ENCODE measurements at regions of chr2 and their contacts with region 1.

Region 1: GRCh38 chr2:170815746-170816503 is 762 bp upstream of the GAD1 start:
- DNase-seq: peak; percentile 54
- H3K4me3 Mint-ChIP-seq: peak overlapping the region; percentile 79
- H3K27ac Mint-ChIP-seq: peak overlapping the region; percentile 77
- H3K4me1 Mint-ChIP-seq: peaks cover 35% of the 10 kb centered on the region
- H3K27me3 Mint-ChIP-seq: peaks cover 83% of the 10 kb centered on the region

Region 2: GRCh38 chr2:170324640-170325046 is 491.3 kb before region 1 on chr2:
- intact Hi-C with region 1: loop called (anchors 1 kb)
- DNase-seq: peak; percentile 36
- H3K4me3 Mint-ChIP-seq: no peak overlapping the region
- H3K27ac Mint-ChIP-seq: no peak overlapping the region
- H3K4me1 Mint-ChIP-seq: no peaks in the 10 kb centered on the region
- H3K27me3 Mint-ChIP-seq: peaks cover 4% of the 10 kb centered on the region

Region 3: GRCh38 chr2:170369894-170370293 is 446.0 kb before region 1 on chr2:
- intact Hi-C with region 1: loop called (anchors 1 kb)
- DNase-seq: no peak
- H3K4me3 Mint-ChIP-seq: no peak overlapping the region
- H3K27ac Mint-ChIP-seq: no peak overlapping the region
- H3K4me1 Mint-ChIP-seq: peaks cover 44% of the 10 kb centered on the region
- H3K27me3 Mint-ChIP-seq: peaks cover 12% of the 10 kb centered on the region

Region 4: DNA sequence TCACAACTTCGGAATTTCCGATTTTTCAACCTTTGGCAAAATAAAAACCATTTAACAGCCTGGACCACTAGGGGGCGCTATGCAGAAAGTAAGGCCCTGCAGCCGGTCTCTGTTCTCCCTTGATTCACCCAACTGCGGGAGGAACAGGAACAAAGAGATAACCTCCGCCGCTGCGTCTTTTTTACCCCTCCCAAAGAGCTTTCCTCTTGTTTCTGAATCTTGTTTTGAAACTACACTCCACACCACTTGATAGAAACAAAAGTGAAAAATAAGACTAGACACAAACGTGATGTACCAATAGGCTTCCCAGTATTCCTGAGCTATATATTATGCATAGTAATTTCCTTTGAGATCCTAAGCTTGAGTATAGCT is 406.8 kb before region 1 on chr2:
- intact Hi-C with region 1: loop called (anchors 1 kb)
- DNase-seq: peak; percentile 52
- H3K4me3 Mint-ChIP-seq: peak overlapping the region; percentile 45
- H3K27ac Mint-ChIP-seq: no peak overlapping the region
- H3K4me1 Mint-ChIP-seq: peaks cover 8% of the 10 kb centered on the region
- H3K27me3 Mint-ChIP-seq: peaks cover 10% of the 10 kb centered on the region

Region 5: DNA sequence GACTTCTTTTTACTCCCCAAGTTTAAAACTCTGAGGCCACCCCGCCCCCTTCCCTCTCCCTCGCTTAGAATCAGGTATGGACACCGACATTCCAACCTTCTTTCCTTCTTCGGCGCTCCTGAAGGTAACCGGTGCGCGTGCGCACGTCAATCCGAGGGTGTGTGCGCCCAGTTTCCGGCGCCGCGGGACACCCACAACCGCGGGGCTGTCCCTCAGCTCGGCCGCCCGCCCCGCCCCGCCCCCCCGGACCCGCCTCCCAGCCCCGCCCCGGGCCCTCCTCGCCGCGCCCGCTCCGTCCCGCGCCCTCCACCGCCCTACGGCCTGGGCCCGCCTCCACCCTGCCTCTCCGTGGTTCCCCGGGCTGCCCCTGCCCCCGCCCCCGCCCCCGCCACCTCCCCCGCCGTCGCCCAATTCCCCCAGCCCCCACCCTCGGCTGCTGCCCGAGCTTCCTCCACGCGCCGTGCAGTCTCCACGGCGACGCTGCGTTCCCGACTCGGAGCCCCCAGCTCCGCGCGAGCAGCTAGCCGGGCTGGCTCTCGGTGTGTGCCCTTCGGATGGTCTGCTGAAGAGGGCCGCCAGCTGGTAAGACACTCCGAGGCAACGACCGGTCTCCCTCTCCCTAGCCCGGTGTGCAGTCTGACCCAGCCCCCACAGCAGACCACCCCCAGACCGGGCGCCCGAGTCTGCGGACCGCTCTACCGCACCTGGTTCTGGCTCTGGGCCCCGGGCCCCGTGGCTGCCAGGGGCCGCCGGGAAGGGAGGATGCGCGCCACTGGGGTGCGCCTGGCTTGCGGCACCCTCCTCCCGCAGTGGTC is 45.1 kb before region 1 on chr2:
- intact Hi-C with region 1: loop called (anchors 2 kb)
- DNase-seq: peak; percentile 58
- H3K4me3 Mint-ChIP-seq: peak overlapping the region; percentile 83
- H3K27ac Mint-ChIP-seq: peak overlapping the region; percentile 55
- H3K4me1 Mint-ChIP-seq: peaks cover 7% of the 10 kb centered on the region
- H3K27me3 Mint-ChIP-seq: peaks cover 45% of the 10 kb centered on the region

Region 6: GRCh38 chr2:170829036-170829435 is 13.1 kb after region 1 on chr2:
- intact Hi-C with region 1: no loop called
- DNase-seq: no peak
- H3K4me3 Mint-ChIP-seq: no peak overlapping the region
- H3K27ac Mint-ChIP-seq: no peak overlapping the region
- H3K4me1 Mint-ChIP-seq: no peaks in the 10 kb centered on the region
- H3K27me3 Mint-ChIP-seq: peaks cover 33% of the 10 kb centered on the region

Region 7: GRCh38 chr2:170862286-170862902 is 46.5 kb after region 1 on chr2:
- intact Hi-C with region 1: no loop called
- DNase-seq: no peak
- H3K4me3 Mint-ChIP-seq: no peak overlapping the region
- H3K27ac Mint-ChIP-seq: no peak overlapping the region
- H3K4me1 Mint-ChIP-seq: no peaks in the 10 kb centered on the region
- H3K27me3 Mint-ChIP-seq: peaks cover 18% of the 10 kb centered on the region

Region 8: DNA sequence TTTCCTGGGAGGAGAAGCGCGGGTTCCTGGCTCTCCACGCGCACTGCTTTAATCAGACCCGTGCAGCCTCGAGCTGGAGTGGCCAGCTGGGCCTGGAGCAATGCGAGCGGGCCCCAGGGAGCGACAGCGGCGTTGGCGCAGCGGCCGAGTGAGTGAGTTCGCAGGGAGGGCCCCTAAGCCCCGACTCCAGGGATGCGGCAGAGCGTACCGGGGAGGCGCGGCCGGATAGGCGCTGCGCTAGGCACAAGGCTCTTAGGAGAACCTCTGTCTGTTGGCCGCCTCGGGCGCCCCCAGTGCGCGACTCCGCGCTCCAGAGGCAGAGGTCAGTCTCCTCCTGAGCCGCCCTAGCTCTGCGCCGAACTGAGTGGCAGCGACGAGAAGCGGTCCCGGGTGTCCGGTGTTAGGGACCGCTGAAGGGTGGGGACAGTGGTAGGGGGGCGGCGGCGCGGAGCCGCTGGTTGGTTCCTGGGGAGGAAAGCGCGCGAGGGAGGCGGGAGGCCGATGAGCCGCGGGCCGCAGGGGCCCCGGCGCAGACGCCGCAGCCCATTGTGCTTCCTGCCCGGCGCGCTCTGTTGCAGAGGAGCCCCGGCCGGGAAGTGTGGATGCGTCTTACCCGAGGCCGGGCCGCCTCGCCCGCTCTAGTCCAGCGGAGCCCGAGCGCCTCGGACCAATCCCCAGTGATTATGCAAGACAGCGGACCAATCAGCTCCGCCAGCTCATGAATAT is 1269.0 kb after region 1 on chr2:
- intact Hi-C with region 1: loop called (anchors 5 kb)
- DNase-seq: no peak
- H3K4me3 Mint-ChIP-seq: peak overlapping the region; percentile 67
- H3K27ac Mint-ChIP-seq: peak overlapping the region; percentile 75
- H3K4me1 Mint-ChIP-seq: peaks cover 49% of the 10 kb centered on the region
- H3K27me3 Mint-ChIP-seq: peaks cover 89% of the 10 kb centered on the region

Measured in activated T-helper 1 cell treated with anti-CD3 and anti-CD28 coated beads, Interleukin-12 subunit alpha, Interleukin-12 subunit beta, Interleukin-2, Interleukin-4 antibody, amounts not matched to agents 30 ng/mL and 10 ng/mL and 1 ng/mL, durations not matched to agents 14 hours and 24 hours and 36 hours (primary cell).